Mucosa of descending colon (tissue), 3 donors: ENCODE measurements at regions of chr3 and their contacts with region 1.

Region 1: GRCh38 chr3:143775459-143775858 is 72.8 kb downstream of the SLC9A9 start:
- DNase-seq: peak in 1 of 3 donors; percentile 21
- ATAC-seq: peak; percentile 62
- H3K4me3 ChIP-seq: no peak overlapping the region
- H3K4me1 ChIP-seq: no peaks in the 10 kb centered on the region
- CTCF ChIP-seq: peak; percentile 22

Region 2: DNA sequence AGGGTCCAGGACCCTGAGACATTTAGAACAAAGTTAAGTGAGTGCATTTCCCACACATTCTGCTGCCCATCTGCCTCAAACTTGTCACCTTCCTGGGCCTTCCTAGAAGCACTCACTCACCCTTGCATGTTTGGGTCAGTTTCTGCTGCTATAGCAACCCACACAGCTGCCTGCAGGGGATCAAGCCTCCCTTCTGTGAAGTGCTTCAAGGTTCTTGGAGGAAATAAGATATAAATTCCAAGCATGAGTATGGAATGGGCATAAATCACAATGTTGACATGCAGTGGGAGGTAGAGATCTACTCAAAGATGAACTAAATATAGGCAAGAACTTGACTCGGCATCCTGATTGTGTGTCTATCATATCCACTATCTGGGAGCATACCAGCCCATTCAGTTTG is 67.6 kb before region 1 on chr3:
- intact Hi-C with region 1: no loop called
- DNase-seq: no peak
- ATAC-seq: no peak
- H3K4me3 ChIP-seq: no peak overlapping the region
- H3K4me1 ChIP-seq: no peaks in the 10 kb centered on the region
- CTCF ChIP-seq: no peak

Region 3: GRCh38 chr3:143875546-143875945 is 100.1 kb after region 1 on chr3:
- intact Hi-C with region 1: no loop called
- DNase-seq: no peak
- ATAC-seq: no peak
- H3K4me3 ChIP-seq: no peak overlapping the region
- H3K4me1 ChIP-seq: no peaks in the 10 kb centered on the region
- CTCF ChIP-seq: no peak

Region 4: DNA sequence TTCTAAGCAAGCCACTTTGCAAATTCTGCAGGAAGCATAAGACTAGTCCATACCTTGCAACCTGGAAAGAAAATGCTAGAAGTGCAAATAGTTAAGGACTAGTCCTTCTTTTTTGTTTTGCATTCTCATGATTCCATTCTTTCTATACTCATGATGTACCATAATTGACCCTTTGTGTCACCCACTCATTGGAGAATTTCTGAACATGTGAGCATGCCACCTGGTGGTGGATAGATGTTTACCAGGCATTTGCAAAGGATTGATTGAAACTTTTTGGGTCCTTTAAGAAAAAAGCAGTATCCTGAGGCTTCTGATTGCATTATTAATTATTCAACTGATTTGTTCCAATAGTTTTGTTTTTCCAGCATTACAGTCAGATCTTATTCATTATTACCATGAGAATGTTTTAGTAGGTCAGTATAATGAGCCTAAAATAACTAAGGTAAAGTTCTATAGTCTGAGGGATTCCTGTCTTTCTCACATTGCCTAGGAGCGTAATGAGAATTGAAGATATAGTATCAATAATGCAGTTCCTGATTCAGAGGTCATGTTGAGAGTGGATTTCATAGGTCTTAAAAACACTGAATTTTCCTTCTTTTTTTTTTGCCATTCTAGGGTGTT is 176.0 kb after region 1 on chr3:
- intact Hi-C with region 1: loop called in 1 of 2 experiments (anchors 5 kb)
- DNase-seq: peak in 1 of 3 donors; percentile 33
- ATAC-seq: no peak
- H3K4me3 ChIP-seq: no peak overlapping the region
- H3K4me1 ChIP-seq: no peaks in the 10 kb centered on the region
- CTCF ChIP-seq: no peak